Caco-2 (cell line): ENCODE measurements at regions of chr10 and their contacts with region 1.

Region 1: GRCh38 chr10:11434324-11434723 is 177.1 kb downstream of the USP6NL start:
- DNase-seq: peak in 1 of 2 experiments; percentile 49
- H3K4me3 ChIP-seq: no peak overlapping the region
- H3K4me3 Mint-ChIP-seq: no peak overlapping the region
- H3K27ac Mint-ChIP-seq: no peak overlapping the region
- H3K4me1 ChIP-seq: no peaks in the 10 kb centered on the region
- H3K4me1 Mint-ChIP-seq: no peaks in the 10 kb centered on the region
- H3K27me3 ChIP-seq: no peaks in the 10 kb centered on the region
- H3K27me3 Mint-ChIP-seq: peaks cover 10% of the 10 kb centered on the region
- CTCF ChIP-seq: peak; percentile 65 to 69

Region 2: GRCh38 chr10:11373619-11374235 is 60.6 kb before region 1 on chr10:
- CTCF ChIA-PET with region 1: no interaction called
- POLR2A ChIA-PET with region 1: no interaction called
- intact Hi-C with region 1: no loop called
- DNase-seq: no peak
- H3K4me3 ChIP-seq: no peak overlapping the region
- H3K4me3 Mint-ChIP-seq: peak overlapping the region; percentile 39
- H3K27ac Mint-ChIP-seq: peak overlapping the region; percentile 5
- H3K4me1 ChIP-seq: no peaks in the 10 kb centered on the region
- H3K4me1 Mint-ChIP-seq: peaks cover 7% of the 10 kb centered on the region
- H3K27me3 ChIP-seq: no peaks in the 10 kb centered on the region
- H3K27me3 Mint-ChIP-seq: peaks cover 3% of the 10 kb centered on the region
- CTCF ChIP-seq: no peak

Region 3: GRCh38 chr10:11414314-11415038 is 19.8 kb before region 1 on chr10:
- CTCF ChIA-PET with region 1: no interaction called
- POLR2A ChIA-PET with region 1: no interaction called
- intact Hi-C with region 1: no loop called
- DNase-seq: no peak
- H3K4me3 ChIP-seq: no peak overlapping the region
- H3K4me3 Mint-ChIP-seq: no peak overlapping the region
- H3K27ac Mint-ChIP-seq: no peak overlapping the region
- H3K4me1 ChIP-seq: no peaks in the 10 kb centered on the region
- H3K4me1 Mint-ChIP-seq: no peaks in the 10 kb centered on the region
- H3K27me3 ChIP-seq: no peaks in the 10 kb centered on the region; the same call in 1 of the 2 replicates
- H3K27me3 Mint-ChIP-seq: peaks cover 6% of the 10 kb centered on the region
- CTCF ChIP-seq: no peak

Region 4: DNA sequence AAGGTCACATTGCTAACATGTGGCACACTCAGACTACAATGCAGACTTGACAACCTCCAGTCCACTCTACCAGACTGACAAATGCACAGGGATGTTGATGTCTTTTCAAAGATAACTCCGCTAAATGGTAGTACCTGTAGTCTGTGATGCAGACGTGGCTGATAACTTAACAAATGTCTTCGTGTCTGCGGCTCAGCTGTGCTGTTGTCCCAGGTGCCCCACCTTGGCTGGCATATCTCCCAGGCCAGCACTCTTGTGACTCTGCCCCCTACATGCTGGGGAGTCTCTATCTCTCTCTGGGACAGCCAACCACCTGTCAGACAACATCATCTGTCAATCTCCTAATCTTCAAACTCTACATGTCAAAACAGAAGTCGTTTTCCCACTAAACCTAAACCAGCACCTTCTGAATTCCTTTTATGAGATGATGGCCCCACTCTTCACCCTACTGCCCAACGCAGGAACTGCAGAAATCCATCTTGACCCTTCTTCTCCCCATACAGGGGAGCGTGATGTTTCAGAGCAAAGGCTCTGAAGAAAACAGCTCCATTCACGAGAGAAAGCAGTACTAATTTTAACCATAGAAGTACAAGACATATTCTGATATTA is 20.7 kb after region 1 on chr10:
- CTCF ChIA-PET with region 1: no interaction called
- POLR2A ChIA-PET with region 1: no interaction called
- intact Hi-C with region 1: loop called (anchors 2 kb)
- DNase-seq: no peak
- H3K4me3 ChIP-seq: no peak overlapping the region
- H3K4me3 Mint-ChIP-seq: no peak overlapping the region
- H3K27ac Mint-ChIP-seq: no peak overlapping the region
- H3K4me1 ChIP-seq: no peaks in the 10 kb centered on the region
- H3K4me1 Mint-ChIP-seq: no peaks in the 10 kb centered on the region
- H3K27me3 ChIP-seq: no peaks in the 10 kb centered on the region
- H3K27me3 Mint-ChIP-seq: peaks cover 8% of the 10 kb centered on the region
- CTCF ChIP-seq: peak; percentile 22 to 43